ENCODE measurements at regions of chr11 and their contacts with region 1.

Region 1: DNA sequence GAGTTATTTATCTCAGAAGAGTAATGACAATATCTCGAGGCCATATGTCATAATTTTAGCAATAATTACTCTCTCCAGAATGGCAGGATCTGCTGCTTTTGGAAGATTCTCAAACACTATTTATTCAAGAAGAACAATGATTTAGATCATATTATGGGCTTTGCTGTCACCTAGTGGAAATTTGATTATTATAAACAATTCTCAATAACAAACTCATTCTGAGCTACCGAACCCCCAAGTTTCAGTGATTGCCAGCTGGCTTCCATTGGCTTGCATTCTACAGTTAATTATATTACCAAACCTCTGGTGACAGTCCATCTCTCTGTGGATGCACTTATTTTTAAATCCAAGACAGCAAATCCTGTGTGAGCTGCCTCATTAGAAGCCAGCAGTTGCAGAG is 27.9 kb upstream of the SLC36A4 start:
- DNase-seq: peak; percentile 13
- ATAC-seq: 0 out of 2 replicates have a peak, but pooled peaks have one; percentile 36
- H3K4me3 ChIP-seq: no peak overlapping the region
- H3K27ac ChIP-seq: no peak overlapping the region
- H3K4me1 ChIP-seq: peaks cover 0 to 5% of the 10 kb centered on the region in 2 experiments; a peak in 1 of 4 replicates
- H3K27me3 ChIP-seq: no peaks in the 10 kb centered on the region
- CTCF ChIP-seq: peak in 2 of 3 experiments; percentile 47 to 50; a peak in 3 of 6 replicates
- POLR2A ChIP-seq: no peak
- RAD21 ChIP-seq: peak; percentile 70

Region 2: GRCh38 chr11:92735039-92735438 is 490.6 kb before region 1 on chr11:
- CTCF ChIA-PET with region 1: no interaction called
- POLR2A ChIA-PET with region 1: no interaction called
- RAD21 ChIA-PET with region 1: no interaction called
- intact Hi-C with region 1: loop called (anchors 10 kb)
- DNase-seq: no peak
- ATAC-seq: no peak
- H3K4me3 ChIP-seq: no peak overlapping the region
- H3K27ac ChIP-seq: no peak overlapping the region
- H3K4me1 ChIP-seq: no peaks in the 10 kb centered on the region
- H3K27me3 ChIP-seq: no peaks in the 10 kb centered on the region
- CTCF ChIP-seq: peak in 2 of 3 experiments; percentile 45 to 49; a peak in 4 of 6 replicates
- POLR2A ChIP-seq: no peak
- RAD21 ChIP-seq: no peak

Region 3: DNA sequence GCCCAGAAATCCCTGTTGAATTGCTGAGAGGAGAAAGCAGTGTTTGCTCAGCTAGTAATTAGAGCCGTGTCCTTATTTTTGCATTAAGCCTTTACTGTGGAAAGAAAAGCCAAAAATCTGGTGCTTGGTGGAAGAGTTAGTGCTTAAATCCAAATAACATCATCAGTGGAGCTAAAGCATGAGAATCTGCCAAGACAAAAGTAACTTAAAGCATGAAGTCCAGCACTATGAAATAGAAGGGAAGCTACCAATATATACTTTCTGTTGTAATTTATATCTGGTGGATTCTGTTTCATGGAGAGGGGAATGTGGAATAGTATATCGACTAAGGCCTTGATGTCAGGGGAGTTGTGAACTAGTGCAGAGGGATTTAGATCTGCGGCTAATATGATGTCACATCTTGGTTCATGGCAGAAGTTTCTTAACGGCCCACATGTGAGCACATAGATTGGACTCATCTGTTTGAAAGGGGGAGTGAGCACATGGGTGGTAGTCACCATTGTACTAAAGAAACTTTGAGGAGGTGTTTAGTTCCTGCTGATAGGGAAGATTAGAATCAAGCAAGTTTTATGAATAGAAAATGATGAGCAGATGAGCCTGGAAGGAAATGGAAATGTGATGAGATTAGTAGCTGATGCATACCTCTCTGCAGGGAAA is 480.6 kb before region 1 on chr11:
- CTCF ChIA-PET with region 1: no interaction called
- POLR2A ChIA-PET with region 1: no interaction called
- RAD21 ChIA-PET with region 1: no interaction called
- intact Hi-C with region 1: no loop called
- DNase-seq: no peak
- ATAC-seq: no peak
- H3K4me3 ChIP-seq: no peak overlapping the region
- H3K27ac ChIP-seq: no peak overlapping the region
- H3K4me1 ChIP-seq: no peaks in the 10 kb centered on the region
- H3K27me3 ChIP-seq: no peaks in the 10 kb centered on the region
- CTCF ChIP-seq: no peak
- POLR2A ChIP-seq: no peak
- RAD21 ChIP-seq: no peak

Region 4: GRCh38 chr11:93131709-93132108 is 94.0 kb before region 1 on chr11:
- CTCF ChIA-PET with region 1: no interaction called
- POLR2A ChIA-PET with region 1: no interaction called
- RAD21 ChIA-PET with region 1: no interaction called
- intact Hi-C with region 1: loop called (anchors 5 kb)
- DNase-seq: no peak
- ATAC-seq: peak; percentile 69; the same call in 1 of the 2 replicates
- H3K4me3 ChIP-seq: no peak overlapping the region
- H3K27ac ChIP-seq: no peak overlapping the region
- H3K4me1 ChIP-seq: no peaks in the 10 kb centered on the region
- H3K27me3 ChIP-seq: no peaks in the 10 kb centered on the region
- CTCF ChIP-seq: peak; percentile 26 to 39 (median 35); a peak in 4 of 6 replicates
- POLR2A ChIP-seq: no peak
- RAD21 ChIP-seq: peak; percentile 62